ENCODE measurements at regions of chr4 and their contacts with region 1.

Region 1: GRCh38 chr4:40309250-40309774 is 25.8 kb upstream of the CHRNA9 start:
- DNase-seq: peak; percentile 93 to 96
- H3K4me3 ChIP-seq: no peak overlapping the region
- H3K27ac ChIP-seq: peak overlapping the region in 1 of 3 donors; percentile 9
- H3K4me1 ChIP-seq: peaks cover 0 to 23% of the 10 kb centered on the region in 2 donors
- H3K27me3 ChIP-seq: no peaks in the 10 kb centered on the region
- CTCF ChIP-seq: peak; percentile 75 to 89 (median 83)
- POLR2A ChIP-seq: no peak

Region 2: GRCh38 chr4:39697740-39698423 is 611.4 kb before region 1 on chr4 and contains the start of gene UBE2K:
- intact Hi-C with region 1: loop called (anchors 10 kb)
- DNase-seq: peak; percentile 87 to 89
- H3K4me3 ChIP-seq: peak within 1 kb of the TSS; percentile 84 to 91 (median 85)
- H3K27ac ChIP-seq: peak within 1 kb of the TSS; percentile 93 to 97 (median 93)
- H3K4me1 ChIP-seq: peaks cover 10 to 21% of the 10 kb centered on the region in 2 donors
- H3K27me3 ChIP-seq: no peaks in the 10 kb centered on the region
- CTCF ChIP-seq: peak in 2 of 6 experiments; percentile 3 to 11
- POLR2A ChIP-seq: peak; percentile 29 to 89
- total RNA-seq, gene UBE2K: 27.1 to 48.5 (median 32.3) TPM

Region 3: GRCh38 chr4:40056716-40057585 is 252.4 kb before region 1 on chr4 and contains the start of gene N4BP2:
- intact Hi-C with region 1: loop called (anchors 5 kb)
- DNase-seq: peak; percentile 83 to 87
- H3K4me3 ChIP-seq: peak within 1 kb of the TSS; percentile 5 to 95 (median 82)
- H3K27ac ChIP-seq: peak within 1 kb of the TSS; percentile 99 to 100 (median 100)
- H3K4me1 ChIP-seq: peaks cover 13 to 19% of the 10 kb centered on the region in 2 donors
- H3K27me3 ChIP-seq: no peaks in the 10 kb centered on the region
- CTCF ChIP-seq: peak in 5 of 6 experiments; percentile 45 to 96 (median 76)
- POLR2A ChIP-seq: peak; percentile 77 to 92
- total RNA-seq, gene N4BP2: 20.4 to 37.4 (median 25.5) TPM

Region 4: GRCh38 chr4:40149960-40150385 is 159.3 kb before region 1 on chr4:
- intact Hi-C with region 1: loop called (anchors 10 kb)
- DNase-seq: peak; percentile 65 to 67
- H3K4me3 ChIP-seq: no peak overlapping the region
- H3K27ac ChIP-seq: no peak overlapping the region
- H3K4me1 ChIP-seq: no peaks in the 10 kb centered on the region
- H3K27me3 ChIP-seq: no peaks in the 10 kb centered on the region
- CTCF ChIP-seq: peak; percentile 71 to 91 (median 79)
- POLR2A ChIP-seq: no peak

Region 5: GRCh38 chr4:40388239-40388985 is 79.1 kb after region 1 on chr4:
- intact Hi-C with region 1: no loop called
- DNase-seq: peak; percentile 54 to 62
- H3K4me3 ChIP-seq: no peak overlapping the region
- H3K27ac ChIP-seq: peak overlapping the region; percentile 39 to 53 (median 51)
- H3K4me1 ChIP-seq: peaks cover 20 to 28% of the 10 kb centered on the region in 2 donors
- H3K27me3 ChIP-seq: no peaks in the 10 kb centered on the region
- CTCF ChIP-seq: peak in 1 of 6 experiments; percentile 14
- POLR2A ChIP-seq: no peak

Region 6: DNA sequence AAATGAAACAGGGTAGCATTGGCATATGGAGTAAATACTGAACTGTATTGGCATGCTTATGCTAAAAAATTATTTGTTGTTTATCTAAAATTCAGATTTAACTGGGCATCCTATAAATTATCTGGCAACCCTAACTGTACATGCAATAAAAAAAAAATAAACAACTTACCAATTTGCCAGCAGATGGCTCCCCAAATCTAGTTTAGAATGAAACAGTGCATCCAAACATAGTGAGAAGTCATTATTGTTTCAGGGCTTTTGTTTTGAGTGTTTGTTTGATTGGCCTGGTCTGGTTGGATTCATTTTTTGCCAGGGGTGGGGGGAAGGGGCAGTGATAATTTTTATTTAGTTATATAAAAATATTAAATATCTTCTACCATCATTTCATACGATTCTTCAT is 427.6 kb after region 1 on chr4:
- intact Hi-C with region 1: no loop called
- DNase-seq: no peak
- H3K4me3 ChIP-seq: no peak overlapping the region
- H3K27ac ChIP-seq: no peak overlapping the region
- H3K4me1 ChIP-seq: peaks cover under 1 to 2% of the 10 kb centered on the region in 2 donors
- H3K27me3 ChIP-seq: no peaks in the 10 kb centered on the region
- CTCF ChIP-seq: peak in 3 of 6 experiments; percentile 50 to 65 (median 57)
- POLR2A ChIP-seq: no peak

Measured in thyroid gland (tissue), 4 donors.